Naive thymus-derived CD4-positive, alpha-beta T cell (primary cell): ENCODE measurements at regions of chr6 and their contacts with region 1.

Region 1: DNA sequence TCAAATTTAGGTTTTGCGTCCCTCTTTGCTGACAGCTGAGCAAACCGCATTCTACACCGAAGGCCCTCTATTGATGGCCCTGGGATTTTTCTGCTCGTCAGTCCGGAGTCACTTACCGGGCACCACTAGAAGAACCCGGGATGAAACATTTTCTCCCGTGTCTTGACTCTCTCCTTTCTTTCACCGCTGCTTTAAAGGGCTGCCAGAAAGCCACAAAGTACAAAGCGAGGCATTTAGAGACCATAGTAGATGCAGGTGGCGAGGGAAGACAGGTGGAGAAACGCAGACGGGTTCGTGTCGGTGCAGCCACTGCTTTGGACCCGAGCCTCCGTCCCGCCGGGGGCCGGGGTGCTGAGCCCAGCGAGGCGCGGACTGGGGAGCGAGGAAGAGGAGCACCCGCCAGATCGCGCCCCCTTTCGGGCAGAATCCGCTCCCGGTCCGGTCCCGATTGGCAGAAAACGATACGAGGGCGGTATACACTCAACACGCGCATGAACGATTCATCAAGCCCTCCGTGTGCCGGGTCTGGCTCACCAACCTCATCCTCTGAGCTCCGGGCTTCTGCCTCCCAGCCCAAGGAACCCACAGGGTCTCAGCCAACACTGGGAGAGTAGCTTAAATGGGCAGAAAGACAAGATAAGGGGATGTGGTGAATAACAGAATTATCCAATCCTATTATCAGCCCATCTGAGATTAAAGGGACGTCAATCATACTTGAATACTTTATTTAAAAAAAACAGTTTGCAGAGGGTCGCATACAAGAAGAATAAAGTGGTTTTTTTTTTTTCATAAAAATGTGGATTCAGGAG is 84.9 kb downstream of the TRIM27 start:
- DNase-seq: peak; percentile 66 to 89 (median 81)
- ATAC-seq: peak; percentile 79
- H3K4me3 ChIP-seq: peak overlapping the region; percentile 83
- H3K4me3 Mint-ChIP-seq: peak overlapping the region; percentile 86 to 99 (median 96)
- H3K27ac ChIP-seq: peak overlapping the region; percentile 60
- H3K27ac Mint-ChIP-seq: peak overlapping the region; percentile 83 to 98 (median 93)
- H3K4me1 ChIP-seq: peaks cover 8 to 11% of the 10 kb centered on the region in 2 donors
- H3K4me1 Mint-ChIP-seq: peaks cover 13 to 31% (median 20%) of the 10 kb centered on the region in 7 donors
- H3K27me3 ChIP-seq: no peaks in the 10 kb centered on the region
- H3K27me3 Mint-ChIP-seq: peaks cover 17 to 66% (median 25%) of the 10 kb centered on the region in 5 donors

Region 2: DNA sequence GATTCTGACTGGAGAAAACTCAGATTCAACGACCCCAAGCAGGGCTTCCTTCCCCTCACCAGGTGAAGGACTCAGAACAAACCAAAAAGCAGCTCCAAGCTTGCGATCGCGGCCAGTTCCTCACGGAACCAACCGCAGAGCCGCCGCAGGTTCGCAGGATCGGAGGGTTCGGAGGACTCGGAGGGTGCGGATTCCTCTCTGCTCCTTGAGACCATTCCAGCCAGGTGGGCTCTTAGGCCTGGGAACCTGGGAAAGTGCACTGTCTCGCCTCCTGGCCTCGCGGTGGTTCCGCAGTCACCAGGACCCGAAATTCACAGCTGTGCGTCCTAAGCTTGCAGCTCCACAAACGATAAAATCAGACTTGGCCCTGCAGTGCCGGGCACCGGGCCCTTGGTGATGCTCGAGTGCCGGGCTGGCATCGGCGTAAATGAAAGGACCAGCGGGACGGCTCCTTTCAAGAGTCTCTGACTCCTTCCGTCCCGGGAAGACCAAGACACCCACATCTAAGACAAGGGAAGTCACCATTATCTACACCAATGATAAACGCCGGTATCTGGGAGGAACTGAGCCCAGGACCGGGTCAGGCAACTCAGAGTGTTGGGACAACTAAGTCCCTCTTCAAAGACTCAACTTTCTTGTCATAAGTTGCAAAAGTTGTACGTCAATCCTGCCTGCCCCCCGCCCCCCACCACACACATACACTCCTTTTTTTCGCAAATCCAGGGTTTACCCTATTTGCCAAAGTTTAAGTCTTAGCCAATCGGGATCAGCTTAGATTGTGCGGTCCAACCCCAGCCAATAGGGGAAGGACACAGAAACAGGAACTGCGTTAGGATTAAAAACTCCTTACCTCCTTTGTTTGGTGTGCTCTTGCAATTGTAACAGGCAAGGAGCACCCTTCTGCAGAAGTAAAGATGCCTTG is 1661.1 kb before region 1 on chr6:
- CTCF ChIA-PET with region 1: no interaction called
- POLR2A ChIA-PET with region 1: no interaction called
- intact Hi-C with region 1: loop called in 1 of 2 experiments (anchors 1 kb)
- DNase-seq: peak; percentile 49 to 78 (median 66)
- ATAC-seq: peak; percentile 83
- H3K4me3 ChIP-seq: peak overlapping the region; percentile 99
- H3K4me3 Mint-ChIP-seq: peak overlapping the region; percentile 90 to 98 (median 96)
- H3K27ac ChIP-seq: peak overlapping the region; percentile 74
- H3K27ac Mint-ChIP-seq: peak overlapping the region; percentile 79 to 100 (median 95)
- H3K4me1 ChIP-seq: peaks cover 0 to 3% of the 10 kb centered on the region in 2 donors
- H3K4me1 Mint-ChIP-seq: peaks cover 0 to 33% (median 14%) of the 10 kb centered on the region in 7 donors
- H3K27me3 ChIP-seq: no peaks in the 10 kb centered on the region
- H3K27me3 Mint-ChIP-seq: peaks cover 0 to 37% (median 0%) of the 10 kb centered on the region in 5 donors

Region 3: DNA sequence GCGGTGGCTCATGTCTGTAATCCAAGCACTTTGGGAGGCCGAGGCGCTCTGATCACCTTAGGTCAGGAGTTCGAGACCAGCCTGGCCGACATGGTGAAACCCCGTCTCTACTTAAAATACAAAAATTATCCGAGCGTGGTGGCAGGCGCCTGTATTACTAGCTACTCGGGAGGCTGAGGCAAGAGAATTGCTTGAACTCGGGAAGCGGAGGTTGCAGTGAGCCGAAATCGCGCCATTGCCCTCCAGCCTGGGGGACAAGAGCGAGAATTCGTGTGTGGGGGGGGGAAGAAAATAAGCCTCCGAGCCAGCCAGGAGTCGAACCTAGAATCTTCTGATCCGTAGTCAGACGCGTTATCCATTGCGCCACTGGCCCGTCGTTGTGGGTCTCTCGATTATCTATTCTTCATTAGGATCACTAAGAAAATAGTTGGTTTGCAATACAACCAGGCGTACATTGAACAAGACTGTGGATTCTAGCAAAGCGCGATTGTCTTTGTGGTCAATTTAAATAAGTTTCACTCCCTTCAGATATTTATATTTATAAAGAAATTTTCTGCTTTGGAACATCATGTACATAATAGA is 1625.2 kb before region 1 on chr6:
- CTCF ChIA-PET with region 1: no interaction called
- POLR2A ChIA-PET with region 1: no interaction called
- intact Hi-C with region 1: no loop called
- DNase-seq: no peak
- ATAC-seq: no peak
- H3K4me3 ChIP-seq: no peak overlapping the region
- H3K4me3 Mint-ChIP-seq: peak overlapping the region in 1 of 10 donors; percentile 14
- H3K27ac ChIP-seq: no peak overlapping the region
- H3K27ac Mint-ChIP-seq: no peak overlapping the region
- H3K4me1 ChIP-seq: no peaks in the 10 kb centered on the region
- H3K4me1 Mint-ChIP-seq: peaks cover 0 to 7% (median 0%) of the 10 kb centered on the region in 7 donors
- H3K27me3 ChIP-seq: peaks cover 0 to 9% of the 10 kb centered on the region in 2 donors
- H3K27me3 Mint-ChIP-seq: peaks cover 31 to 70% (median 60%) of the 10 kb centered on the region in 5 donors

Region 4: DNA sequence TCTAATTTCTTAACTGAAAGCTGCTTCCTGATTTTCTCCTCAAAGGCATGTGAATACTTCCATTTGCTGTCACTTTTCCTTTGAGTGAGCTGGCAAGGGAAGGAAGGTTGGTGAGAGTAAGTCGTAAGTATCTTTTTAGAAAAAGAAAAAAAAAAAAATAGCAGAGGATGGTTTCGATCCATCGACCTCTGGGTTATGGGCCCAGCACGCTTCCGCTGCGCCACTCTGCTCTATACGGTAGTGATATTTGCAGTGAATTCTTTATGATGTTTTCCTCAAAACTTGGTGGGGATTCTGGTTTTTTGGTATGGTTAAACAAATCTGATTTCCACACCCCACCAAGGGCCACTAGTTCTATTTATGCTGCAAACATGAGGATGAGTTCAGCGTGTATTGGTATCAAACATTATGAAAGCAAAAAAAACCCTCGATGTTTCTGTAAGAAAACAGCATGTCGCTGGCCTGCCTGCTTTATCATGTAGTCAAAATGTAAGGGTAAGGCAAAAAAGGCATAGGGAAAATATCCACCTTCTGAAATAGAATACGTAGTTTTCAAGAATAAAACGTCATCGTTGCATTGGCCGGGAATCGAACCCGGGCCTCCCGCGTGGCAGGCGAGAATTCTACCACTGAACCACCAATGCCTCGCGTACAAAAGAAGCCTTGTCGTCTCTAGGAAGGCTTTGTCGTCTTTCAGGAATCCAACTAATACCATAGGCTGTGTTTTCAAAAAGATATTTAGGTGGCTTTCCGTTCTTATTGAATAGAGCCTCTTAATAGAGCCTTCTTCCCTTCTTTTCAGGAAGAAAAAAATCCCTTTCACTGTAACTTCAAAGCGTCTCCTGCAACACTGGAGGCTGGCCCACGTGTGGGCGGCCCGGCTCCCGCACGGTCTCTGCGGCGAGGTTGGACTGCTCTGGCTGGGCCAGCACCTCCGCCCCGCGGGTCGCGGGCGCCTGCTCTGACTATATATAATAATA is 936.2 kb before region 1 on chr6:
- CTCF ChIA-PET with region 1: no interaction called
- POLR2A ChIA-PET with region 1: no interaction called
- intact Hi-C with region 1: loop called (anchors 1 to 2 kb)
- DNase-seq: peak; percentile 75 to 94 (median 90)
- ATAC-seq: peak; percentile 92
- H3K4me3 ChIP-seq: peak overlapping the region; percentile 95
- H3K4me3 Mint-ChIP-seq: peak overlapping the region; percentile 75 to 97 (median 91)
- H3K27ac ChIP-seq: peak overlapping the region; percentile 82
- H3K27ac Mint-ChIP-seq: peak overlapping the region; percentile 95 to 99 (median 99)
- H3K4me1 ChIP-seq: peaks cover 0 to 3% of the 10 kb centered on the region in 2 donors
- H3K4me1 Mint-ChIP-seq: peaks cover 0 to 26% (median 15%) of the 10 kb centered on the region in 7 donors
- H3K27me3 ChIP-seq: no peaks in the 10 kb centered on the region
- H3K27me3 Mint-ChIP-seq: peaks cover 4 to 35% (median 13%) of the 10 kb centered on the region in 5 donors

Region 5: DNA sequence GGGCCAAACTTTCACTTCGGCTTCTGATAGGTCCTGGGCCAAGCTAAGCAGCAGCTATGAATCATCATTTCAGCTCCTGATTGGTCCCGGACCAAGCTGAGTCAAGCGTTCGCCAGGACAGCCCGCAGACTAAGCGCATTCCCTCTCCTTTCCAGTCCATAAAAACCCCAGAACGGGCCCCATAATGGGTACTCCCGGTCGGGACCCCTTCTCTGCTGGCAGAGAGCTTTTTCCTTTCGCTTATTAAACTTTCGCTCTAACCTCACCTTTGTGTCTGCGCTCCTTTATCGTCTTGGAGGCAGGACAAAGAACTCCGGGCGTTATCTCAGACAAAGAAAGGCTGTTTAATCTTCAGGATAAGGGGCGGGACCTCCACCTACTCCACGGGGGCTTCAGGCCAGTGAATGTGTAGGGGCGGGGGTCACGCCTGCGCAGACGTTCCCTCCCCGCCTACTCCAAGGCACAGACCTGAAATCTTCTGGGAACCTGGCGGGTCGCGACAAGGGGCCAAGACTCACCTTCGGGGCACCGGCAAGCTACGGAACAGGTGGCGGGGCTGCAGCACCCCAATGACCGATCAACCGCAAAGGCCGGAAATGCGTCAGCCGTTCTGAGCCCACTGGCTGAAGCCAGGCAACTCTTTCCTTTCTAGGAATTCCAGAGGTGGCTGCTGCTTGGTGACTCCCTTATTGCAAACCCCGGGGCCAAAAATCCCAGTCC is 503.1 kb before region 1 on chr6 and contains the start of gene ZSCAN31:
- CTCF ChIA-PET with region 1: no interaction called
- POLR2A ChIA-PET with region 1: no interaction called
- intact Hi-C with region 1: no loop called
- DNase-seq: peak; percentile 43 to 87 (median 76)
- ATAC-seq: peak; percentile 95
- H3K4me3 ChIP-seq: peak within 1 kb of the TSS; percentile 97
- H3K4me3 Mint-ChIP-seq: peak within 1 kb of the TSS in 1 of 10 donors; percentile 58
- H3K27ac ChIP-seq: peak within 1 kb of the TSS; percentile 92
- H3K27ac Mint-ChIP-seq: peak within 1 kb of the TSS in 1 of 9 donors; percentile 47
- H3K4me1 ChIP-seq: peaks cover 9 to 10% of the 10 kb centered on the region in 2 donors
- H3K4me1 Mint-ChIP-seq: peaks cover 0 to 16% (median 9%) of the 10 kb centered on the region in 7 donors
- H3K27me3 ChIP-seq: no peaks in the 10 kb centered on the region
- H3K27me3 Mint-ChIP-seq: peaks cover 0 to 3% (median 0%) of the 10 kb centered on the region in 5 donors
- total RNA-seq, gene ZSCAN31: 0.93 to 2.4 (median 1.2) TPM

Region 6: DNA sequence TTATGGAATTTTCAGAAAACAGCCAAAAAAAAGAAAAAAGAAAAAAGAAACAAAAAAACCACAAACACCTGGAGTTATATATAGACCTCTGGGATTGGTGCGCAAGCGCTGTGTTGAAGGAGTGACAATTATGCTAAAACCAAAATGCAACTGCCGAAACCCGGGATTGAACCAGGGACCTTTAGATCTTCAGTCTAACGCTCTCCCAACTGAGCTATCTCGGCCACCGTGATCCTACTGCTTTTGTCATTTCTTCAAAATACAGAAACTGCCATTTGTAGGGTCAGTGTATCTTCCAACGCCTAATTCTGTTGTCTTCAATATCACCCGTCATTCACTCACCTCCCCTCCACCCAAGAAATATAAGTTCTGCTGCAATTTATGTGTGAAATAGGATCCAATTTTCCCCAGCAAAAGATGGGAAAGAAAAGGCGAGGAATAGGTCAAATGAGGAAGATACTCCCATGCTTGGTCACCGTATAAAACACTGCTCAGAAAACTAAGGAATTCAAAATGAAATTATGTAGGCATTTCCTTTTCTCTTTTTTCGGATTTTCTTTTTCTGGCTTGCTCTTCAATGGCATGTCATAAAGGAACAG is 31.1 kb before region 1 on chr6:
- CTCF ChIA-PET with region 1: no interaction called
- POLR2A ChIA-PET with region 1: no interaction called
- intact Hi-C with region 1: no loop called
- DNase-seq: no peak
- ATAC-seq: no peak
- H3K4me3 ChIP-seq: no peak overlapping the region
- H3K4me3 Mint-ChIP-seq: peak overlapping the region in 4 of 10 donors; percentile 2 to 43 (median 13)
- H3K27ac ChIP-seq: no peak overlapping the region
- H3K27ac Mint-ChIP-seq: peak overlapping the region in 3 of 9 donors; percentile 31 to 49 (median 33)
- H3K4me1 ChIP-seq: no peaks in the 10 kb centered on the region
- H3K4me1 Mint-ChIP-seq: peaks cover 0 to 30% (median 7%) of the 10 kb centered on the region in 7 donors
- H3K27me3 ChIP-seq: peaks cover 26 to 31% of the 10 kb centered on the region in 2 donors
- H3K27me3 Mint-ChIP-seq: peaks cover 83 to 95% (median 90%) of the 10 kb centered on the region in 5 donors

Region 7: GRCh38 chr6:28825732-28826293 is 13.0 kb before region 1 on chr6:
- CTCF ChIA-PET with region 1: interaction called, 12 read pairs
- POLR2A ChIA-PET with region 1: no interaction called
- intact Hi-C with region 1: no loop called
- DNase-seq: no peak
- ATAC-seq: no peak
- H3K4me3 ChIP-seq: no peak overlapping the region
- H3K4me3 Mint-ChIP-seq: peak overlapping the region in 4 of 10 donors; percentile 12 to 58 (median 19)
- H3K27ac ChIP-seq: no peak overlapping the region
- H3K27ac Mint-ChIP-seq: peak overlapping the region in 2 of 9 donors; percentile 47 to 48
- H3K4me1 ChIP-seq: no peaks in the 10 kb centered on the region
- H3K4me1 Mint-ChIP-seq: peaks cover 8 to 18% (median 11%) of the 10 kb centered on the region in 7 donors
- H3K27me3 ChIP-seq: peaks cover 4 to 34% of the 10 kb centered on the region in 2 donors
- H3K27me3 Mint-ChIP-seq: peaks cover 74 to 95% (median 94%) of the 10 kb centered on the region in 5 donors

Region 8: DNA sequence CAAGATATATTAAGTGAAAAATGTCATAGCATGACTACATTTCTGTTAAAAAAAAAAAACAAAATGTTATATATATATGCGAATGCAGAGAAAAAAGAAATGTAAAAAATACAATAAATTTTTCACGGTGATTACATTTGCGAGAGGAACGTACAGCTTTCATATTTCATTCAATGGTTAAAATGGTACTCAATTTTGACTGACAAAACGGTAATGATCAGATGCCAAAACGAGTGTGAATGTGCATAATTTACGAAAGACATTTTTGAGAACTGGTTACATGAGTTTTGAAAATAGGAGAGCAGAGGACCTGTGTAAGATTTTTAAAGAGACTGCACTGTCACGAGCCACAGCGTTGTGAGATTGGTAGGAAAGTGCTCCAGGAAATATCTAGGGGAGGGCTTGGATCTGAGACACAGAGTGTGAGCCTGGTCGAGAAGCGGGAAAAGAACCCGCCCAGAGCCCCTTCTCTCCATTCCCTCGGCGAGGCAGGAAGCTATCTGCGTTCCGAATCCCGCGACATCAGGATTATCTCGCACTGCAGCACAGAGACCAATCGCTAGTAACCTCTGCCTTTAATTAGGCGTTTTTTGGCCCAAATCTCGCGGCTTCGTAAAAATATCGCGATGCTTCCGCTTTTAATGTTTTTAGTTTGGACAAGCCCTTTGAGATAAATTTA is 56.4 kb after region 1 on chr6:
- CTCF ChIA-PET with region 1: interaction called, 5 read pairs
- POLR2A ChIA-PET with region 1: interaction called, 13 read pairs
- intact Hi-C with region 1: loop called (anchors 1 kb)
- DNase-seq: peak; percentile 72 to 95 (median 91)
- ATAC-seq: peak; percentile 83
- H3K4me3 ChIP-seq: peak overlapping the region; percentile 82
- H3K4me3 Mint-ChIP-seq: peak overlapping the region; percentile 92 to 100 (median 98)
- H3K27ac ChIP-seq: peak overlapping the region; percentile 99
- H3K27ac Mint-ChIP-seq: peak overlapping the region; percentile 98 to 100 (median 100)
- H3K4me1 ChIP-seq: peaks cover 5 to 6% of the 10 kb centered on the region in 2 donors
- H3K4me1 Mint-ChIP-seq: peaks cover 0 to 32% (median 14%) of the 10 kb centered on the region in 7 donors
- H3K27me3 ChIP-seq: no peaks in the 10 kb centered on the region
- H3K27me3 Mint-ChIP-seq: peaks cover 0 to 15% (median 0%) of the 10 kb centered on the region in 5 donors

Region 9: DNA sequence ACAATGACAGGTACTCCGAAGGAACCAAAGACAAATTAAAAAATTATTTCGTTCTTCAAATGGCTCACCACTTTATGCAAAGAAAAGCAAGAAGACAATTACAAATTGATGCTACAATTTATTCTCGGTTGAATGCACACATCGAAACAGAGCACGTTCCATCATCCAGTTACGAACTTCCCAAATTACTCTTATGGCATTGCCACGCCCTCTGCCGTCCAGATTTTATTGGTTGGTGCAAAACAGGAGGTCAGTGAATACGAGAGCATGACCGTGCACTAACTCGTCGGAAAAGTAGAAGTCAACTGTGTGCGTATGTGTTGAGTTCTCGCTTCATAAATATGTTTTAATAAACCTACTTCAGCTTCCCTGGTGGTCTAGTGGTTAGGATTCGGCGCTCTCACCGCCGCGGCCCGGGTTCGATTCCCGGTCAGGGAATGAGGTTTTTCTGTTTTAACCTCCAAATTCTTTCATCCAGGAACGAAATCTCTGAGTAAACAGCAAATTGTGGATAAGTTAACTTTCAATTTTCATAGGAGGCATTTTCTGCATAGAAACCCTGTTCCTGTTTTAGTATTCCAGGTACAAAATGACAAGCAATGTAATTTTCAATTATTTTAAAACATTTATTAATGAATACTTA is 143.1 kb after region 1 on chr6:
- CTCF ChIA-PET with region 1: interaction called, 23 read pairs
- POLR2A ChIA-PET with region 1: interaction called, 9 read pairs
- intact Hi-C with region 1: loop called (anchors 1 kb)
- DNase-seq: peak; percentile 48 to 89 (median 86)
- ATAC-seq: peak; percentile 81
- H3K4me3 ChIP-seq: peak overlapping the region; percentile 99
- H3K4me3 Mint-ChIP-seq: peak overlapping the region; percentile 85 to 100 (median 92)
- H3K27ac ChIP-seq: peak overlapping the region; percentile 47
- H3K27ac Mint-ChIP-seq: peak overlapping the region; percentile 87 to 100 (median 99)
- H3K4me1 ChIP-seq: peaks cover 7 to 18% of the 10 kb centered on the region in 2 donors
- H3K4me1 Mint-ChIP-seq: peaks cover 30 to 80% (median 66%) of the 10 kb centered on the region in 7 donors
- H3K27me3 ChIP-seq: no peaks in the 10 kb centered on the region
- H3K27me3 Mint-ChIP-seq: peaks cover 14 to 61% (median 36%) of the 10 kb centered on the region in 5 donors

Region 10: DNA sequence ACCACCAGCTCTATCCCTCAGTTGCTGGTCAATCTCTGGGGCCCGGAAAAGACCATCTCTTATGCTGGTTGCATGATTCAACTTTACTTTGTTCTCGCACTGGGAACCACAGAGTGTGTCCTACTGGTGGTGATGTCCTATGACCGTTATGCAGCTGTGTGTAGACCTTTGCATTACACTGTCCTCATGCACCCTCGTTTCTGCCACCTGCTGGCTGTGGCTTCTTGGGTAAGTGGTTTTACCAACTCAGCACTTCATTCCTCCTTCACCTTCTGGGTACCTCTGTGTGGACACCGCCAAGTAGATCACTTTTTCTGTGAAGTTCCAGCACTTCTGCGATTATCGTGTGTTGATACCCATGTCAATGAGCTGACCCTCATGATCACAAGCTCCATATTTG is 273.3 kb after region 1 on chr6:
- CTCF ChIA-PET with region 1: interaction called, 3 read pairs
- POLR2A ChIA-PET with region 1: no interaction called
- intact Hi-C with region 1: loop called in 1 of 2 experiments (anchors 2 kb)
- DNase-seq: no peak
- ATAC-seq: no peak
- H3K4me3 ChIP-seq: no peak overlapping the region
- H3K4me3 Mint-ChIP-seq: no peak overlapping the region
- H3K27ac ChIP-seq: no peak overlapping the region
- H3K27ac Mint-ChIP-seq: no peak overlapping the region
- H3K4me1 ChIP-seq: no peaks in the 10 kb centered on the region
- H3K4me1 Mint-ChIP-seq: no peaks in the 10 kb centered on the region
- H3K27me3 ChIP-seq: no peaks in the 10 kb centered on the region
- H3K27me3 Mint-ChIP-seq: peaks cover 12 to 45% (median 40%) of the 10 kb centered on the region in 5 donors

Region 11: GRCh38 chr6:29537714-29538403 is 699.0 kb after region 1 on chr6:
- CTCF ChIA-PET with region 1: no interaction called
- POLR2A ChIA-PET with region 1: no interaction called
- intact Hi-C with region 1: no loop called
- DNase-seq: no peak
- ATAC-seq: no peak
- H3K4me3 ChIP-seq: no peak overlapping the region
- H3K4me3 Mint-ChIP-seq: no peak overlapping the region
- H3K27ac ChIP-seq: no peak overlapping the region
- H3K27ac Mint-ChIP-seq: no peak overlapping the region
- H3K4me1 ChIP-seq: no peaks in the 10 kb centered on the region
- H3K4me1 Mint-ChIP-seq: peaks cover 0 to 2% (median 0%) of the 10 kb centered on the region in 7 donors
- H3K27me3 ChIP-seq: no peaks in the 10 kb centered on the region
- H3K27me3 Mint-ChIP-seq: peaks cover 11 to 26% (median 15%) of the 10 kb centered on the region in 5 donors